BJ (cell line): ENCODE measurements at regions of chr17 and their contacts with region 1.

Region 1: DNA sequence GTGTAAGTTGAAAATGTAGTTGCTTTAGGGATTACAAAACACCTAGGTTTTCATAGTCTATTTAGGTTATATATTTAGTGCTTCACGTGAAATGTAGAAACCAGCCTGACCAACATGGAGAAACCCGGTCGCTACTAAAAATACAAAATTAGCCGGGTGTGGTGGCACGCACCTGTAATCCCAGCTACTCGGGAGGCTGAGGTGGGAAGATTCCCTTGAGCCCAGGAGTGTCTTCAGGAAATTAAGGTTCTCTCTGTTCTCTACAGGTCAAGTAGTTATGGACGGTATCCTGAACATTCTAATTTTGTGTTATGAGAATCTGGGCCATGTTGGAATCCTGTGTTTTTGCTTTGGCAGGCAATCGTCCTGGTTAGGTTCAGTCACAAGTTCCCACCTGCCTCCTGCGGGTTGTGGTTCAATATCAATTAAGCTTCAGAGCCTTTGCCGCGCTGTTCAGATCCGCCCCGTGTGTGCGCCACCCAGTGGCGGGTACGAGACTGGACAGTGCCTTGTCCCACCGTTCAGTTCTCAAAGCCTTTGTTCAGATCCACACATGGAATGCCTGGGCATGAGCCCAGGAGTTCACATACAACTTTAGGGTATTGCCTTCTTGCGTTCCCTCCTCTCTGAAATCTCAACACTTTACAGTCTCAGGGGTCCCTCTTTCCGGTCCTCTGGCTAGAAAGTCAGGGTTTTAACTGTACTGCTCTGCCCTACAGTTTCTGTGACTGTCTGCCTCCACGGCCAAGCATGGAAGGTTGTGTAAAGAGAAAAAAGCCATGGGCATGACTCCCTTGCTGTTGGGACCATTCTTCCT is 41.7 kb downstream of the HEATR6 start:
- DNase-seq: peak; percentile 14
- H3K4me3 ChIP-seq: no peak overlapping the region
- H3K27me3 ChIP-seq: peaks cover 3% of the 10 kb centered on the region
- CTCF ChIP-seq: peak; percentile 98

Region 2: DNA sequence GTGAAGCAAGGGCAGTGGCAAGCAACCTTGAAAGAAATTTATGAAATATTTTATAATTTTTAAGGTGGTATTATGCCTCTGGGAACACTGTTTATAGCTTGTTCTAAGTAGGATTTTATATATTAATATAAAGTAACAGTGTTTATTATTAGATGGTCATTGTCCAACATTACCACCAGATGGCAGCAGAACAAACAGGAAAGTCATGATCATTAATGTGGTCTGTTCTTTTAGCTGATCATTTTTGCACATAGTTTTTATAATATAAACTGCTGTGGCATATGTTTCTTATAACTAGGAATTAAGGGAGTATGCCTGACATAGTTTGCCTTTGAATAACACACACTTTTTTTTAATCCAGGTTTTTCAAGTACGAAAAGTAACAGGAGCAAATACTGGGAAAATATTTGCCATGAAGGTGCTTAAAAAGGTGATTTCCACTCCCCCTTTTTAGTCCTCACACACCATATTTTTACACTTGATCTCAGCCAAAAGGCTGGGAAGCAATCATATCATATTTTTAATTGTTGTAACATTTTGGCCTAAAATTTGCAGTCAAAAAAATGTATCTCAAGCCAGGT is 122.6 kb before region 1 on chr17:
- CTCF ChIA-PET with region 1: interaction called, 17 read pairs
- POLR2A ChIA-PET with region 1: no interaction called
- DNase-seq: no peak
- H3K4me3 ChIP-seq: no peak overlapping the region
- H3K27me3 ChIP-seq: no peaks in the 10 kb centered on the region
- CTCF ChIP-seq: peak; percentile 54

Region 3: DNA sequence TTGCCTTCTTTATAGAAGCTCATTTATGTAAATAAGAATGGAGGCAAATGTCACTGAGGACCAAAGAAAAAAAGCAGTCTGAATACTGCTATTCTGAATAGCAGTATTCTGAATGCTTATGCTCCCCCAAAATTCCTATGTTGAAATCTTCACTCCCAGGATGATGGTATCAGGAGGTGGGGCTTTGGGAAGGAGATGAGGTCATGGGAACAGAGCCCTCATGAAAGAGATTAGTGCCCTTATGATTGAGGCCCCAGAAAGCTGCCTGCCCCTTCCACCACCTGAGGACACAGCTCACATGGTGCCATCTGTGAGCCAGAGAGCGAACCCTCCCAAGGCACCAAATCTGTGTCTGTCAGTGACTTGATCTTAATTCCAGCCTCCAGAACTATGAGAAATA is 12.9 kb after region 1 on chr17:
- CTCF ChIA-PET with region 1: interaction called, 33 read pairs
- POLR2A ChIA-PET with region 1: no interaction called
- DNase-seq: no peak
- H3K4me3 ChIP-seq: no peak overlapping the region
- H3K27me3 ChIP-seq: no peaks in the 10 kb centered on the region
- CTCF ChIP-seq: no peak

Region 4: GRCh38 chr17:60065136-60065535 is 28.1 kb after region 1 on chr17:
- CTCF ChIA-PET with region 1: interaction called, 12 read pairs
- POLR2A ChIA-PET with region 1: no interaction called
- DNase-seq: no peak
- H3K4me3 ChIP-seq: no peak overlapping the region
- H3K27me3 ChIP-seq: no peaks in the 10 kb centered on the region
- CTCF ChIP-seq: no peak

Region 5: GRCh38 chr17:60108306-60109055 is 71.5 kb after region 1 on chr17:
- CTCF ChIA-PET with region 1: no interaction called
- POLR2A ChIA-PET with region 1: no interaction called
- DNase-seq: no peak
- H3K4me3 ChIP-seq: no peak overlapping the region
- H3K27me3 ChIP-seq: no peaks in the 10 kb centered on the region
- CTCF ChIP-seq: no peak